Pancreas (tissue), 10 donors: ENCODE measurements at regions of chr10 and their contacts with region 1.

Region 1: DNA sequence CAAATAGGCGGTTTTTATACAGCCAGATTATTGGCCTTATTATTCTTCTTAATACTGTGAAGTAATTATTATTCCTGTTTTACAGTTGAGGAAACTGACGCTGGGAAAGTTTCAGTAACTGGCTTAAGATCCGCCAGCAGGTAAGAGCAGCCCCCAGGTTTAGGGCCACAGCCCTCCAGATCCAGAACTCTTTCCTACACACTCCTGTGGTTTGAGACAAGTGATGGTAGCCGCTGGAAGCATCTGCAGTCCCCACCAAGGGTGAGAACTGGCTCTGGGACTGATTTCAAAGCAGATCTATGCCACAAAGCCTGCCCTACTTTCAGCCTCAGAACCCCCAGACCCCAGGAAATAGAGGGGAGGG is 3.0 kb upstream of the UNC5B start:
- DNase-seq: no peak
- ATAC-seq: no peak
- H3K4me3 ChIP-seq: no peak overlapping the region
- H3K27ac ChIP-seq: no peak overlapping the region
- H3K4me1 ChIP-seq: peaks cover 0 to 7% (median 3%) of the 10 kb centered on the region in 3 donors
- H3K27me3 ChIP-seq: no peaks in the 10 kb centered on the region
- CTCF ChIP-seq: no peak

Region 2: DNA sequence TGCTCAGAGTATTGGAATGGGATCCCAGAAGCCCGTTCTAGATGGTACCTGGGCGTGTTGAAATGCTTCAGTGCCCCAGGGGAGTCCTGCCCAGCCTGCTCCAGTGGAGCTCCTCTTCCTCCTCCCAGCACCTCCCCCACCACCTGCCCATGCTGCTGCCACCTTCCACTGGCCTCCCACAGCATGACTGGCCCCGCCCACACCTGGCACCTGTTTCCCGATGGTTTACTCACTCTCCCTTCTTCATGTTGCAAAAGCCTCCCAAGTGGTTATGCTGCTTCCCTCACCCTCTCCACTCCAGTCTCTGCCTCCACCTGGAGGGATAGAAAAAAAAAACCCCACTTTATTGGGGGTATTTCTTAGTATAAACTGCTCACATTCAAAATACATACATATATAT is 288.8 kb before region 1 on chr10:
- intact Hi-C with region 1: loop called in 2 of 3 experiments (anchors 5 kb)
- DNase-seq: peak; percentile 58 to 80 (median 68)
- ATAC-seq: peak; percentile 60 to 95 (median 80)
- H3K4me3 ChIP-seq: no peak overlapping the region
- H3K27ac ChIP-seq: no peak overlapping the region
- H3K4me1 ChIP-seq: no peaks in the 10 kb centered on the region
- H3K27me3 ChIP-seq: no peaks in the 10 kb centered on the region
- CTCF ChIP-seq: no peak

Region 3: GRCh38 chr10:70925377-70926225 is 283.7 kb before region 1 on chr10:
- intact Hi-C with region 1: loop called in 2 of 3 experiments (anchors 5 kb)
- DNase-seq: peak in 4 of 6 donors; percentile 50 to 86 (median 62)
- ATAC-seq: peak; percentile 70 to 95 (median 86)
- H3K4me3 ChIP-seq: no peak overlapping the region
- H3K27ac ChIP-seq: no peak overlapping the region
- H3K4me1 ChIP-seq: no peaks in the 10 kb centered on the region
- H3K27me3 ChIP-seq: no peaks in the 10 kb centered on the region
- CTCF ChIP-seq: peak; percentile 89 to 93 (median 91)

Region 4: GRCh38 chr10:71319042-71319799 is 109.9 kb after region 1 on chr10 and contains the start of gene SLC29A3:
- intact Hi-C with region 1: no loop called
- DNase-seq: peak; percentile 75 to 92 (median 83)
- ATAC-seq: peak; percentile 94 to 96 (median 95)
- H3K4me3 ChIP-seq: peak within 1 kb of the TSS; percentile 57 to 87 (median 78)
- H3K27ac ChIP-seq: peak within 1 kb of the TSS in 2 of 4 donors; percentile 59 to 67
- H3K4me1 ChIP-seq: peaks cover 0 to 6% (median 0%) of the 10 kb centered on the region in 3 donors
- H3K27me3 ChIP-seq: no peaks in the 10 kb centered on the region
- CTCF ChIP-seq: peak; percentile 14 to 42 (median 26)
- total RNA-seq, gene SLC29A3: 2.2 to 7.0 (median 3.6) TPM